Activated CD4-positive, alpha-beta memory T cell treated with anti-CD3 and anti-CD28 coated beads, Interleukin-2, amount 10 ng/mL, durations not matched to agents 7 days and 5 days (primary cell): ENCODE measurements at regions of chr2 and their contacts with region 1.

Region 1: DNA sequence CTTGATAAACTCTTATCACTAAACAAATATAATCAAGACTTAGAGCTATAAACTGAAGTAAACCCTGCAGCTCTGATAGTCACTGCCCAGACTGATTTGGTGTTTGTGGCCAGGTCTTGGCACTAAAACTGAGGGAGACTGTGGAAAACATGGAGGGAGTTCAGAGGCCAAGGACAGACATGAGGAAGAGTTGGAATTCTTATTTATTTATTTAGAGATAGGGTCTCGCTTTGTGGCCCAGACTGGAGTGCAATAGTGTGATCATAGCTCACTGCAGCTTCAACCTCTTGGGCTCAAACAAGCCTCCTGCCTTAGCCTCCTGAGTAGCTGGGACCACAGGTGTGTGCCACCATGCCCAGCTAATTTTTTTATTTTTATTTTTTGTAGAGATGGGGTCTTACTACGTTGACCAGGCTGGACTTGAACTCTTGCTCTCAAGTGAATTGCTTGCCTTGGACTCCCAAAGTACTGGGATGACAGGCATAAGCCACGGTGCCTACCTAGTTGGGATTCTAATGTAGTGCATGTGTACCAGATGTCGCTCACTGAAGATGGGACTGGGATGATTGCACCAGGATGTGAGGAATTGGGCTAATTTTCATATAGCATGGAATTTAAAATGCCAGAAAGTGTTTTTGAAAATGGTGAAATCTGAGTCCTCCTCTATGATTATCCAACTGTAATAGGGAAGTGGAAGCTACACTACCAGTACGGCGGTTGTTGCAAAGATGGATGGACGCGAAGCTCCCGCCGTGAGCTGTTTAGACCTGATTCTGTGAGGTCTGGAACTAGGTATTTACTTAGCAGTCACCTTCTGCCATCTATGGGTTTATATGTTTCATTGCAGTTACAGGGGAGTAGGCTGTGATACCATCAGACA is 52.7 kb upstream of the CTLA4 start:
- DNase-seq: peak; percentile 55
- H3K4me3 Mint-ChIP-seq: no peak overlapping the region
- H3K27ac Mint-ChIP-seq: no peak overlapping the region
- H3K4me1 Mint-ChIP-seq: peaks cover 57% of the 10 kb centered on the region
- H3K27me3 Mint-ChIP-seq: peaks cover 6% of the 10 kb centered on the region

Region 2: GRCh38 chr2:203238704-203239526 is 576.0 kb before region 1 on chr2 and contains the start of gene CYP20A1:
- CTCF ChIA-PET with region 1: interaction called, 11 read pairs
- POLR2A ChIA-PET with region 1: interaction called, 12 read pairs
- DNase-seq: peak; percentile 97
- H3K4me3 Mint-ChIP-seq: peak within 1 kb of the TSS; percentile 100
- H3K27ac Mint-ChIP-seq: peak within 1 kb of the TSS; percentile 99
- H3K4me1 Mint-ChIP-seq: peaks cover 37% of the 10 kb centered on the region
- H3K27me3 Mint-ChIP-seq: no peaks in the 10 kb centered on the region
- total RNA-seq, gene CYP20A1: 18.9 to 21.6 TPM

Region 3: DNA sequence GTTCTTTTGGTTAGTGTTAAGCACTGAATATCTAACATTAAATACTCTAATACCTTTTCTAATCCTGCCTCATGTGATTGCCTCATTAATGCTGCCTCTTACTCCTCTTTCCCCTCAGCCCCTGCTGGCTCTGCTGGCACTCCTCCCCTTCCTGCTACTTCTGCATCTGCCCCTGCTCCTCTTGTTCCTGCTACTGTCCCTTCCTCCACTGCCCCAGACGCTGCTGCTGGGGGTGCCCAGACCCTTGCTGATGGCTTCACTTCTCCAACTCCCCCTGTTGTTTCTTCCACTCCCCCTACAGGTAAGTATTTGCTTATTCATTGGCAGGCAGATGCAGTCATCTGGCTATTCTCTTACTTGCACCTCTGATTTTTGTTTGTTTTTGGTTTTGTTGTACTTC is 418.2 kb before region 1 on chr2:
- CTCF ChIA-PET with region 1: no interaction called
- POLR2A ChIA-PET with region 1: no interaction called
- DNase-seq: no peak
- H3K4me3 Mint-ChIP-seq: no peak overlapping the region
- H3K27ac Mint-ChIP-seq: no peak overlapping the region
- H3K4me1 Mint-ChIP-seq: peaks cover 5% of the 10 kb centered on the region
- H3K27me3 Mint-ChIP-seq: no peaks in the 10 kb centered on the region

Region 4: DNA sequence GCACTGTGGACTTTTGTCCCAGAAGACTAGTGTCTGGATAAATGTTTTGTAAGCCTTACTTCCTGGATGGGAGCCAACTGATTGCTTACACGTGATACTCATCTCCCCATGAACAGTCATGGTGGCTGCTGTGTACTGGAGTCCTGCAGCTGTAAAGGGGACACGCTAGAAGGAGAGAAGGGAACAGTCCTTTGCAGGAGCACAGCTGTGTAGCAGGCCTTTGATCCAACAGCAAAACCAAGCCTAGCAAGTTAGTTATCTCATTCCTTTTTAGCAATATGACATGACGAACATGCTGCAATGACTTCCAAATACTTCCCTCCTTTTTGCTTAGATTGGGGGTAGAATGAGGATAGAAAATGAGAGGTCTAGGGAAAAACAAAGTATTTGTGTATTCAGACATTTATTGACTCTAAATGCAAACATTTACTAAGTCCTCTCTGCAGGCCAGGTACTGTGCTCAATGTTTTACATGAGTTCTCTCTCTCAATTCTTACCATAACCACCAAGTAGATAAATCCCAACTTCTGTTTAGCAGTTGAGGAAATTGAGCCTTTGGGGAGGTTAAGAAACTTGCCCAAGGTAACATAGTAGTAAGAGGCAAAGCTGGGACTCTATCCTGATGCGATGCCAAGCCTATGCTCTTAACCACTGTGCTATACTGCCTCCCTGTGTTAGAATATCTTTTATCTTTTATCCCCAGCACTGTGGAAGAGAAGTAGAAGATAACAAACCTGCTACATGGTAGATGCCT is 163.9 kb before region 1 on chr2:
- CTCF ChIA-PET with region 1: interaction called, 13 read pairs
- POLR2A ChIA-PET with region 1: no interaction called
- DNase-seq: no peak
- H3K4me3 Mint-ChIP-seq: no peak overlapping the region
- H3K27ac Mint-ChIP-seq: no peak overlapping the region
- H3K4me1 Mint-ChIP-seq: peaks cover 11% of the 10 kb centered on the region
- H3K27me3 Mint-ChIP-seq: no peaks in the 10 kb centered on the region

Region 5: DNA sequence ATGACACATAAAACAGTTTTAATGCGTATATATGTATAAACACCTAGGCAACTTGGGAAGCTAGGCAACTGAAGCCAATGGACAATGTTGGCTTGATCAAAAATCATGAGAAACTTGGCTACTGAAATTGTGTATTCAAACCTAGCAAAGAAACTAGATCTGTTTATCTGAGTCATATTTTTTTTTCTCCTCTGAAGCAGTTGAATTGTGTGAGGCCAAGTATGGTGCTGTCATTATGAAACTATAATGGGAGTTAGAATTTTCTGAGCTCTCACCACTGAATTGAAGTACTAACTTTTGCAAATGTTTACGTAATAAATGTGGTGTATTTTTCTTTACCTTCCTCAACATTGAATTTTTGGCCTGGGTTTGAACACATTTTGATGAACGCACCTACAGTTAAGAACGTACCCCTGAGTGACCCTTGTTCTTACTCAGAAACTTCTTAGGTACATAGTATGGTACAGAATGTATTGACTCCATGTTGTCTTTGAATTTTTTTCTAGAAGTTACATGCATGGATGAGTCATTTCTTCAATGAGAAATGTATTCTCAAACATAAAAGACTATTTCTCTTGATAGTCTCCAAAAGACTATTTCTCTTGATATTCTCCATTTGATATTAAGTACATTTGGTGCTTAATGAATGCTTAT is 84.7 kb before region 1 on chr2:
- CTCF ChIA-PET with region 1: interaction called, 3 read pairs
- POLR2A ChIA-PET with region 1: interaction called, 22 read pairs
- DNase-seq: no peak
- H3K4me3 Mint-ChIP-seq: peak overlapping the region; percentile 28
- H3K27ac Mint-ChIP-seq: peak overlapping the region; percentile 94
- H3K4me1 Mint-ChIP-seq: peaks cover 92% of the 10 kb centered on the region
- H3K27me3 Mint-ChIP-seq: no peaks in the 10 kb centered on the region

Region 6: DNA sequence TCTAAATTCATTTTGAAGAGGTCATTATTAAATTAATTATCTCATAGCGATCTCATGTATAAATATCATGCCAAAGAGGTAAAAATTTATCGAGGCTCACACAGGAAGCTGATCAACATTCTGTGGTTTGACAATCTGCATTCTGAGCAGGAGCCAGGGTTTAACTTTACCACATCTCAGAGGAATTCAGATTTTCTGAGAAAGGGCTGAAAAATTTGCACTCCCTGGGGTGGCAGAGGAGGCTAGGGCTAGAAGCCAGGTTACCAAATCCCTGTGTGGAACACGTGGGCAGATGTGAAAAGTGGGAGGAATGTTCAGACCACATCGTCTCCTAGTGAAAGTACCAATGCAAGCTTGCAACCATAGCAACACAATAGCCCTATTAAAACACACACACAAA is 10.8 kb before region 1 on chr2:
- CTCF ChIA-PET with region 1: interaction called, 14 read pairs
- POLR2A ChIA-PET with region 1: interaction called, 19 read pairs
- DNase-seq: peak; percentile 38
- H3K4me3 Mint-ChIP-seq: no peak overlapping the region
- H3K27ac Mint-ChIP-seq: peak overlapping the region; percentile 38
- H3K4me1 Mint-ChIP-seq: peaks cover 68% of the 10 kb centered on the region
- H3K27me3 Mint-ChIP-seq: no peaks in the 10 kb centered on the region

Region 7: DNA sequence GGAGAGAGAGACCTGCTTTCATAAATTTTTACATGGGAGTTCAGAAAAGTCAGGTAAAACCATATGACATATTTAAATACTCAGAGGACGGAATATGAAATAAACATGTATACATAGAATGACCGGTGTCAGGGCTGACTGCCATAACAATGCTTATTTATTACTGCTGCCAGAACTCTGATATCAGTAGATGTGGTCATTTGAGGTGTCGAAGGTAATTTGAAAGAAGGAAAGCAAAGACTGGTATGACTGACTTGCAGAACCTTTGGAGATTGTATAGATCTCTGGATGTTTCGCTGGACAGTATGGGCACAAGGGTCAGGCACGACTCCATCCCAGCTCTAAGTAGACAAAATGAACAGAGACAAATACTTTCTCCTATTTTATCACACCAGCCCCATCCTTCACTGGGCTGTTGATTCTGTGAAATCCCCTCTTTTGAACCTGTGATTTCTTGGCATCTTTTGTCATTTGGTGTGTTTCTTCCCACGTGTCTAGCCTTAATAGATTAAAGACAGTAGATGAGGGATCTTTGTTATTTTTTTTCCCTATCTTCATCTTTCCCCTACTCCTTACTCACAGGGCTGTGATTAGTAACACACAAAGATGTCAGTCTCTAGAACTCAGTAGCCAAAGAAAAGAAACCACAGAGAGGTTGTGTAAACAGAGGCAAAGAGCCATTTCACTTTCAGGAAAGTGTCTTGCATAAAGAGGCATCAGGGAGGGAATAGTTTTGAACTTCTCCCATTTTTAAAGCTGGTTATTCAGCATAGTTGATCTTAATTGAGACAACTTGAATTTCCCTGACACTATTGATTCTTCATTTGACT is 183.3 kb after region 1 on chr2:
- CTCF ChIA-PET with region 1: no interaction called
- POLR2A ChIA-PET with region 1: no interaction called
- DNase-seq: no peak
- H3K4me3 Mint-ChIP-seq: peak overlapping the region; percentile 29
- H3K27ac Mint-ChIP-seq: peak overlapping the region; percentile 61
- H3K4me1 Mint-ChIP-seq: peaks cover 63% of the 10 kb centered on the region
- H3K27me3 Mint-ChIP-seq: no peaks in the 10 kb centered on the region

Region 8: GRCh38 chr2:204325468-204325867 is 510.6 kb after region 1 on chr2:
- CTCF ChIA-PET with region 1: no interaction called
- POLR2A ChIA-PET with region 1: no interaction called
- DNase-seq: peak; percentile 53
- H3K4me3 Mint-ChIP-seq: no peak overlapping the region
- H3K27ac Mint-ChIP-seq: no peak overlapping the region
- H3K4me1 Mint-ChIP-seq: peaks cover 13% of the 10 kb centered on the region
- H3K27me3 Mint-ChIP-seq: peaks cover 13% of the 10 kb centered on the region